ENCODE measurements at regions of chr2 and their contacts with region 1.

Region 1: GRCh38 chr2:226873051-226873620 is 37.3 kb downstream of the RHBDD1 start:
- DNase-seq: peak; percentile 39
- ATAC-seq: peak; percentile 67
- H3K4me3 Mint-ChIP-seq: no peak overlapping the region
- H3K27ac Mint-ChIP-seq: peak overlapping the region; percentile 59
- H3K4me1 Mint-ChIP-seq: peaks cover 32% of the 10 kb centered on the region
- H3K27me3 Mint-ChIP-seq: no peaks in the 10 kb centered on the region

Region 2: DNA sequence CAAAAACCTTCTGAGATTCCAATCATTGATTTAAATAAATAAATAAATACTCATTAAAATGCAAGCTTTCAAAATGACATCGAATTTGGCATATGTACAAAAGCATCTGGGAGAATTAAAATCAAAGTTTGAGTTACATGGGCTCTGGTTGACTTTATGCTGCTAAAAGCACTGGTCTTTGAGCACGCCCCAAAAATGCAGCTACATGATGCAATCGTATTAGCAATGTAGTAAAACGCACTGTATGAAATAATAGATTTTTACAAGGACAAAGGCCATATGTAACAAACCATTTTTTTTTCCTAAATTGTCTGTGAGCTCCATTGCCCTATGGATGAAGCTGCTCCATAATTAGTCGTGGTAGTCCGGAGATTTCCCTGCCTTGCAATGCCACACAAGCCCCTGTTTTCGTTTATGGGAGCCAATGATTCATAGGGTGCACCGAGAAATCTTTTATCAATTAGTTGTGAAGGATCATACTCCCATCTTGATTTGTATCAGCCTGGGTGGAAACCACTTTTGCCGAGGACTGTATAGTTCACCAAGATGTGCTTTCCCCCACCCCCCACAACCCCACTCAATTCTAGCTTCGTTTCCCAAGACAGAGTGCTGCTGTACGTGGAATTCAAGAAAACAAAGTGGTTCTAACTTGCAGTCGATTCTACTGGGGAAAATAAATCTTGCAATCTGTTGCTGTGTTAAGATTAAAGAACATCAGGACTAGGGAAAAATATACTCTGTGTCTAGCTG is 341.9 kb before region 1 on chr2:
- CTCF ChIA-PET with region 1: no interaction called
- POLR2A ChIA-PET with region 1: no interaction called
- intact Hi-C with region 1: no loop called
- DNase-seq: no peak
- ATAC-seq: no peak
- H3K4me3 Mint-ChIP-seq: no peak overlapping the region
- H3K27ac Mint-ChIP-seq: no peak overlapping the region
- H3K4me1 Mint-ChIP-seq: no peaks in the 10 kb centered on the region
- H3K27me3 Mint-ChIP-seq: peaks cover 3% of the 10 kb centered on the region

Region 3: GRCh38 chr2:226733189-226733858 is 139.8 kb before region 1 on chr2:
- CTCF ChIA-PET with region 1: no interaction called
- POLR2A ChIA-PET with region 1: no interaction called
- intact Hi-C with region 1: no loop called
- DNase-seq: peak; percentile 16
- ATAC-seq: peak; percentile 42
- H3K4me3 Mint-ChIP-seq: no peak overlapping the region
- H3K27ac Mint-ChIP-seq: peak overlapping the region; percentile 58
- H3K4me1 Mint-ChIP-seq: peaks cover 13% of the 10 kb centered on the region
- H3K27me3 Mint-ChIP-seq: no peaks in the 10 kb centered on the region

Region 4: DNA sequence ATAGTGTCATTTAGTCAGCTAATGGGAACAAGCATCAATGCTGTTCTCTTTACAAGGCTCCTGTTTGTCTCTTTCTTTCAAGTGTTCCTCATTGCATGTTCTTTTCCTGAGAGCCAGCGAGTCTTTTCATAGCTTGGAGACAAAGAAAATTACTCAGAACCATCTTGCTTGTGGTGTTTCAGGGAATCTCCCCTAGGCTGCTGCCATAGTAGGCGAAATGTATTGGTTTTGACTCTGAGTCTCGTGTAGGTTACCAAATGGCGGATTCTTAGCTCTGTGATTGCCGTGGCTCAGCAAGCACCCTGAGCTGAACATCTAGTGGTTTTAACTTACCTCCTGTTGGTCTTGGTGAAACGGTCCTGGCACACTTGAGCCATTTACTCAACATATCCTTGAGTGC is 31.5 kb after region 1 on chr2:
- CTCF ChIA-PET with region 1: no interaction called
- POLR2A ChIA-PET with region 1: no interaction called
- intact Hi-C with region 1: loop called (anchors 1 to 2 kb)
- DNase-seq: peak; percentile 49
- ATAC-seq: peak; percentile 83
- H3K4me3 Mint-ChIP-seq: no peak overlapping the region
- H3K27ac Mint-ChIP-seq: peak overlapping the region; percentile 56
- H3K4me1 Mint-ChIP-seq: peaks cover 49% of the 10 kb centered on the region
- H3K27me3 Mint-ChIP-seq: no peaks in the 10 kb centered on the region

Measured in activated CD4-positive, alpha-beta T cell treated with anti-CD3 and anti-CD28 coated beads for 36 hours (primary cell).